HepG2 (cell line): ENCODE measurements at regions of chr10 and their contacts with region 1.

Region 1: DNA sequence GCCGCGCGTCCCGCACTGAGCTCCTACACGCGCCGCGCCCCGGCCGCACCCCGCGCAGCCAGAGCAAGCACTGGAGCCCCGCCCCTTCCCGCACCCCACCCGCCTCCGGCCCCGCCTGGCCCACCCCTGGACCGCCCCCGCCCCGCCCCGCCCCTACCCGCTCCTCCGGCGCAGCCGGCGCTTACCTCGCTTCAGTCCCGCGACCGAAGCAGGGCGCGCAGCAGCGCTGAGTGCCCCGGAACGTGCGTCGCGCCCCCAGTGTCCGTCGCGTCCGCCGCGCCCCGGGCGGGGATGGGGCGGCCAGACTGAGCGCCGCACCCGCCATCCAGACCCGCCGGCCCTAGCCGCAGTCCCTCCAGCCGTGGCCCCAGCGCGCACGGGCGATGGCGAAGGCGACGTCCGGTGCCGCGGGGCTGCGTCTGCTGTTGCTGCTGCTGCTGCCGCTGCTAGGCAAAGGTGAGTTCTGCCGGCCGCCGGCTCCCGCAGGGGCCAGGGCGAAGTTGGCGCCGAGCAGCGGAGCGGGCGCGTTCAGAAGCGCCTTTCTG is at the start of gene RET:
- DNase-seq: no peak
- ATAC-seq: no peak
- H3K4me3 ChIP-seq: no peak within 1 kb of the TSS
- H3K27ac ChIP-seq: no peak within 1 kb of the TSS
- H3K4me1 ChIP-seq: no peaks in the 10 kb centered on the region
- H3K27me3 ChIP-seq: peaks cover 9 to 45% of the 10 kb centered on the region in 2 experiments; a peak in 4 of 5 replicates
- CTCF ChIP-seq: no peak
- EP300 ChIP-seq: no peak
- POLR2A ChIP-seq: no peak
- RAD21 ChIP-seq: no peak
- total RNA-seq, gene RET: 0.02 TPM in 1 of 2 replicates, not detected in the other

Region 2: DNA sequence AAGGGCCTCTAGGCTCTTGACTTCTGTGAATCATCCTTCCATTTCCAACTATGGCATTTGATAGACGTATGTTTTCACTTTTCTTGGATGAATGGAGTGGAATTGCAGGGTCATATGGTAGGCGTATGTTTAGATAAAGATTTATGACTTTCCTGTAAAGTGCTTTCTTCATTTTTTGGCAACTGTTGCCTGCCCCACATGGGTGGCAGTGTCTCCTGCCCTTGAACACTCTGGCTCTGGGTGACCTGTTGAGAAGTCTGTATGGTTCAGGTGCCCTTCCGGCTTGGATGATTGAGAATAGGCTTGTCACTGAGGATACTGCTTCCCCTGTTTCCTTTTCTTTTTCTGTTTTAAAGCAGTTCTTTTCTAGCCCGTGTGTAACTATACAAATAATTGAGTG is 23.0 kb after region 1 on chr10:
- CTCF ChIA-PET with region 1: no interaction called
- POLR2A ChIA-PET with region 1: no interaction called
- in situ Hi-C with region 1: no loop called
- intact Hi-C with region 1: loop called (anchors 2 kb)
- DNase-seq: no peak
- ATAC-seq: no peak
- H3K4me3 ChIP-seq: no peak overlapping the region
- H3K27ac ChIP-seq: no peak overlapping the region
- H3K4me1 ChIP-seq: no peaks in the 10 kb centered on the region
- H3K27me3 ChIP-seq: peaks cover 2 to 66% of the 10 kb centered on the region in 2 experiments; a peak in 4 of 5 replicates
- CTCF ChIP-seq: no peak
- EP300 ChIP-seq: no peak
- POLR2A ChIP-seq: no peak
- RAD21 ChIP-seq: no peak